Prostate gland (tissue), 2 donors: ENCODE measurements at regions of chr1 and their contacts with region 1.

Region 1: GRCh38 chr1:151606395-151606794 is 5.5 kb upstream of the SNX27 start:
- DNase-seq: no peak
- H3K4me3 ChIP-seq: no peak overlapping the region
- H3K27ac ChIP-seq: no peak overlapping the region
- H3K4me1 ChIP-seq: no peaks in the 10 kb centered on the region
- H3K27me3 ChIP-seq: no peaks in the 10 kb centered on the region
- CTCF ChIP-seq: no peak
- POLR2A ChIP-seq: no peak

Region 2: DNA sequence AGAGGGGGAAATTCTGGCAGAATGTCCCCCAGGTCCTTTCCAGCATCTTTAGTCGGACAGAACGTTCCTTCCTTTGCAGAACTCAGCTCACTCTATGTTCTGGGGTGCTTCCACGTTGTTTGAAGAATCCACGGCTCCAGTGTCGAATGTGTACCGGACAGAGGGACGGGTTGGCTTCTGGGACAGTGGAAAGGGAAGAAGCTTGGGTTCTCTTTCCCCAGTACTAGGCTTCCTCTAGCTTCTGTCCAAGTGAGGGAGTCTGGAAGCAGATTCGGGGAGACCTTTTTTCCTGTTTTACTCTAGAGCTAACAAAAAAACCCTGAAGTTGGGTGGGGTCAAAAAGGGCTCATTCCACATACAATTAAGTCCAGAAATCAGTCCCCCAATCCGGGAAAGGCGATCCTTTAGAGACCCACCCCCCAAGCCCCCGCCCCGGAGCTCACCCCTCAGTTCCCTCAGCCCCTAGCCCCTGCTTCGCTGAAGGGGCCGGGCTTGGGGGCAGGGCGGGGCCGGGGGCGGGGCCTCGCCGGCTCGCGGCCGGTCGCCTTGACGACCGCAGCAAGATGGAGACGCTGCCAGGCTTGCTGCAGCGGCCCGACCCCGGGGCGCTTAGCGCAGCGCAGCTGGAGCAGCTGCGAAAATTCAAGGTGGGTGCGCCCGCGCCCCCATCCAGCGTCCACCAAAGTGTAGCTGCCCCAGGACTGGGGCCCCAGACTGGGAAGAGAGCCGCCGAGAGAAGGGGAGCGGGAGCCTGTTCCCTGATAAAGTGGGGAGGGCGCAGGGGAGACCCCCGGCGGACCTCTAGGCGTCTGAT is 114.8 kb after region 1 on chr1 and contains the start of gene RIIAD1:
- intact Hi-C with region 1: loop called (anchors 5 kb)
- DNase-seq: no peak
- H3K4me3 ChIP-seq: peak within 1 kb of the TSS; percentile 19 to 33
- H3K27ac ChIP-seq: peak within 1 kb of the TSS; percentile 53 to 65
- H3K4me1 ChIP-seq: no peaks in the 10 kb centered on the region
- H3K27me3 ChIP-seq: no peaks in the 10 kb centered on the region
- CTCF ChIP-seq: no peak
- POLR2A ChIP-seq: no peak
- total RNA-seq, gene RIIAD1: 7.8 TPM in 1 of 2 donors, not detected in the other